ENCODE measurements at regions of chr14 and their contacts with region 1.

Region 1: GRCh38 chr14:67240978-67241414 is 239 bp upstream of the PALS1 start:
- DNase-seq: peak; percentile 96 to 98
- H3K4me3 ChIP-seq: peak overlapping the region; percentile 90 to 92
- H3K27ac ChIP-seq: peak overlapping the region; percentile 98 to 99
- H3K4me1 ChIP-seq: peaks cover 0 to 42% (median 8%) of the 10 kb centered on the region in 4 donors
- H3K27me3 ChIP-seq: no peaks in the 10 kb centered on the region
- CTCF ChIP-seq: no peak

Region 2: GRCh38 chr14:66413901-66414300 is 827.1 kb before region 1 on chr14:
- intact Hi-C with region 1: no loop called
- DNase-seq: no peak
- H3K4me3 ChIP-seq: no peak overlapping the region
- H3K27ac ChIP-seq: no peak overlapping the region
- H3K4me1 ChIP-seq: no peaks in the 10 kb centered on the region
- H3K27me3 ChIP-seq: no peaks in the 10 kb centered on the region
- CTCF ChIP-seq: no peak

Region 3: DNA sequence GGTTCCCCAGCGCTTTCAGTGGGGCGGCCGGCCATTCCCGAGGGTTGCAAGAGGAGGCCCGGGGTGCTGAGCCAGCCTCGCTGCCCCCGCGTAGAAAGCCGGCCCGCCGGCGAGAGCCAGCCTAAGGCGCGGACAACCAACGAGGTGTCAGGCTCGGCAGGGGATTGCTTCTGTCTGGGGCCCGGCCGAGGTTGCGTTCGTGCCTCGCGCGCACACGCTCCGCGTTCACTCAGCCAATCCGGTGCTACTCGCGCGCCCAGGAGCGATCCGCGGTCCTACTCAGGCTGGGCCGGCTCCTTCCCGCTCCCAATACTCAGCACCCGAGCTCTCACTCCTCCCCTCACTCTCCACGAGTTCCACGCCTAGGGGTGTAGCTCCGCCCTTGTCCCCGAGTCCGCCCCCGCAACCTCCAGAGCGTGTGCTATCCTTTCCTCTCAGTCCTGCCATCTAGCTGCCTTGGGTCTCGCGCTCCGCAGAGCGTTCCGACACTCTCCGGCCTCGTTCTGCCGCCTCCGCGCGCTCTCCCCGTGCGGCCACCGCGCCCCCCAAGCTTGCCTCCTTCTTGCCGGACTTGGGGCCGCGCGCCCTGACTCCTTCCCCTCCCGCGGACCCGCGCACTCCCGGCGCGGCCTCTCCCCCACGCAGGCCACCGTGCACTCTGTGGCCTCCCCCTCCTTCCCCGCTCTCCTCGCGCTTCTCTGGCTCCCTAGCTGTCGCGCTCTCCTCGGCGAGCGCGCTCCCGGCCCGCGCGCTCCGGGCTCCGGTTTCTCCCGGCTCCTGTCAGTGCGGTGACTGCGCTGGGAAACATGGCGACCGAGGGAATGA is 733.1 kb before region 1 on chr14 and contains the start of gene GPHN:
- intact Hi-C with region 1: loop called (anchors 10 kb)
- DNase-seq: peak; percentile 95 to 98
- H3K4me3 ChIP-seq: peak within 1 kb of the TSS; percentile 92 to 93
- H3K27ac ChIP-seq: peak within 1 kb of the TSS; percentile 92 to 95
- H3K4me1 ChIP-seq: peaks cover 3 to 19% (median 8%) of the 10 kb centered on the region in 4 donors
- H3K27me3 ChIP-seq: no peaks in the 10 kb centered on the region
- CTCF ChIP-seq: peak; percentile 1 to 44

Region 4: GRCh38 chr14:67187210-67187609 is 53.8 kb before region 1 on chr14:
- intact Hi-C with region 1: no loop called
- DNase-seq: no peak
- H3K4me3 ChIP-seq: no peak overlapping the region
- H3K27ac ChIP-seq: no peak overlapping the region
- H3K4me1 ChIP-seq: peaks cover 0 to 6% (median 3%) of the 10 kb centered on the region in 4 donors
- H3K27me3 ChIP-seq: no peaks in the 10 kb centered on the region
- CTCF ChIP-seq: no peak

Measured in tibial artery (tissue), 4 donors.